Activated naive CD4-positive, alpha-beta T cell treated with anti-CD3 and anti-CD28 coated beads for 36 hours (primary cell): ENCODE measurements at regions of chr13 and their contacts with region 1.

Region 1: DNA sequence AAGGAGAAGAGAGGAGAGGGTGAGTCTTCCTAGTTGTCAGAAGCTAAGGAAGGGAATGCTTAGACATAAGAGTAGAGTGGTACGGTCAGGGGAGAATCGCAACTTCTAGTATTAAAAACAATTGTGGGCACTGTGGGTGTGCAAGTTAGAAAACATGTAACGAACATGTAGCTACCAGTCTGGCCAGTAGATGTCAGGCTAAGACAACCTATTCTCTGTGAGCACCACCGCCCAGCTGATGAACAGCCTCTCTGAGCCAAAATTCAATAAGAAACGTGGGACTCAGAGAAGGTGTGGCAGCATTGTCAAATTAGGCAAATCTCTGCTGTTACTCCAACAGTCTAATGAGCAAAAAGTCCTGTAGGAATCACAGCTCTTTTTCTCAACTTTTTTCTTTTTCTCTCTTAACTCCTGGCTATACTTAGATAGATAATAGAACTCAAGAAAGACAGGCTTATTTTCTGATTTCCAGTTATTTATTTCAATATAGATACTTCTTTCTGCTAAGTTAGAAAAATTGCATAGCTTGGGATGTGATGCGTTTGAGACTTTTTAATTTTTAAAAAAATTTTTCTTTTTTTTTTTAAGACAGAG is 186.2 kb downstream of the USP12 start:
- DNase-seq: peak; percentile 86
- H3K4me3 Mint-ChIP-seq: no peak overlapping the region
- H3K27ac Mint-ChIP-seq: no peak overlapping the region
- H3K4me1 Mint-ChIP-seq: no peaks in the 10 kb centered on the region
- H3K27me3 Mint-ChIP-seq: peaks cover 5% of the 10 kb centered on the region

Region 2: GRCh38 chr13:26557393-26558023 is 427.9 kb before region 1 on chr13 and contains the start of gene WASF3:
- CTCF ChIA-PET with region 1: no interaction called
- intact Hi-C with region 1: no loop called
- DNase-seq: peak; percentile 56
- H3K4me3 Mint-ChIP-seq: peak within 1 kb of the TSS; percentile 43
- H3K27ac Mint-ChIP-seq: no peak within 1 kb of the TSS
- H3K4me1 Mint-ChIP-seq: peaks cover 8% of the 10 kb centered on the region
- H3K27me3 Mint-ChIP-seq: peaks cover 36% of the 10 kb centered on the region
- total RNA-seq, gene WASF3: not detected

Region 3: GRCh38 chr13:26946684-26947343 is 38.6 kb before region 1 on chr13:
- CTCF ChIA-PET with region 1: no interaction called
- intact Hi-C with region 1: loop called (anchors 2 kb)
- DNase-seq: no peak
- H3K4me3 Mint-ChIP-seq: no peak overlapping the region
- H3K27ac Mint-ChIP-seq: no peak overlapping the region
- H3K4me1 Mint-ChIP-seq: no peaks in the 10 kb centered on the region
- H3K27me3 Mint-ChIP-seq: no peaks in the 10 kb centered on the region

Region 4: DNA sequence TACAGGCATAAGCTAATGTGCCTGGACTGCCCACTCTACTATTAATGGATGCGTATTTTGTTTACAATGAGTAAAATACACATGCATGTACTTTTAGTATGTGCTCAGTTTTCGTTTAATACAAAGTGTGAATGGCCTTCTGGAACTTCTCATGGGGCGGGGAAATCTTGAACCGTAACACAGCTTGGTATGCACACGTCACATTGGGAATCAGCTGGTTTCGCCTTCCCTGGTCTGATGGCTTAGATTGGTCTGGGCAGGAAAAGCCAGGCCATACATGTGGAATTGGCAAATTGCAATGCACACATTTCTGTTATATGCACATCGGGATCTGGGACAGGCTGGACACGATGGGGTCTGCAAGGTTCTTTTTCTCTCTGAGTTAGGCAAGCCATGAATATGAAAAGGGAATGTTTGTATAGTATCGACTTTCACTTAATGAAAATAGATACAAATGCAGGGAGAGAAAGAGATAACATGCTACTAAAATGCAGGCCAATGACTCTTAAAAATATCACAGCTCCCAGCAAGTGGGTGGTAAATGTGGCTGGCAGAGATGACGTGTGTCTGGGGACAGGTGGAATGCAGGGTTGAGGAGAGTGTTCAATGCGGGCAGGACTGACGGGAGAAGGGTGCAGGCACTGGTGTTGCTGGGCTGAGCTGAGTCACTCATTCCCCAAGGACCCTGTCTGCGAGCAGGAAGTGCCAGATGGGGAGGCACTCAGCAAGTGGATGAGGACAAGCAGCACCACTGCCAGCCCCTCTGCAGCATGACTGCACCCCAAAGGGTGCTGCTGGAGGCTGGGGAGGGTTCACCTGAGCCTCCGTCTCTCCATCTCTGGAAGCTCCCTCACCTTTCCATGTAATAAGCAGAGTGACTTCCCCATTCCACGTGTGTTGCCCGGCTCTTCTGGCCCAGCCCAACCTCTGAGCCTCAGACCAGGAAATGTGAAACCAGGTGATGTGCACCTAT is 20.8 kb before region 1 on chr13:
- CTCF ChIA-PET with region 1: no interaction called
- intact Hi-C with region 1: no loop called
- DNase-seq: no peak
- H3K4me3 Mint-ChIP-seq: no peak overlapping the region
- H3K27ac Mint-ChIP-seq: no peak overlapping the region
- H3K4me1 Mint-ChIP-seq: no peaks in the 10 kb centered on the region
- H3K27me3 Mint-ChIP-seq: no peaks in the 10 kb centered on the region

Region 5: DNA sequence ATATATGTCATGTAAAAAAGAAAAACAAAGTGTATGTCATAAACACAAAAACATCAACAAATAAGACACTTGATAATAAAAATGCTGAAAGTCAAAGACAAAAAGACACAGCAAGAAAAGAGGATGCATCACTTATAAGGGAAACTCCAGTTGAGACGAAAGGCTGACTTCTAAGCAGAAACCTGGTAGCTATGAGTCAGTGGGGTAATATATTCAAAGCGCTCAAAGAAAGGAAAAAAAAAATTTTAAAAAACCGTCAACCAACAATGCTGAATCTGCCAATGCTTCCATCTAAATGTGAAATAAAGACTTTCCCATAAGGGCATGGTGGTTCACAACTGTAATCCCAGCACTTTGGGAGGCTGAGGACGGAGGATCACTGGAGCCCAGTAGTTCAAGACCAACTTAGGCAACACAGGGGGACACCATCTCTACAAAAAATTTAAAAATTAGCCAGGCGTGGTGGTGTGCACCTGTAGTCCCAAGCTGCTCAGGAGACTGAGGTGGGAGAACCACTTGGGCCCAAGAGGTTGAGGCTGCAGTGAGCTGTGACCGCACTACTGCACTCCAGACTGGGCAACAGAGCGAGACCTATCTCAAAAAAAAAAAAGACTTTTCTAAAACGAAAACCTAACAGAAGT is 162.3 kb after region 1 on chr13:
- CTCF ChIA-PET with region 1: no interaction called
- intact Hi-C with region 1: no loop called
- DNase-seq: no peak
- H3K4me3 Mint-ChIP-seq: peak overlapping the region; percentile 56
- H3K27ac Mint-ChIP-seq: peak overlapping the region; percentile 93
- H3K4me1 Mint-ChIP-seq: peaks cover 81% of the 10 kb centered on the region
- H3K27me3 Mint-ChIP-seq: no peaks in the 10 kb centered on the region

Region 6: GRCh38 chr13:27171827-27172494 is 186.6 kb after region 1 on chr13:
- CTCF ChIA-PET with region 1: interaction called, 5 read pairs
- intact Hi-C with region 1: loop called (anchors 5 kb)
- DNase-seq: peak; percentile 79
- H3K4me3 Mint-ChIP-seq: peak overlapping the region; percentile 81
- H3K27ac Mint-ChIP-seq: peak overlapping the region; percentile 81
- H3K4me1 Mint-ChIP-seq: peaks cover 61% of the 10 kb centered on the region
- H3K27me3 Mint-ChIP-seq: no peaks in the 10 kb centered on the region

Region 7: DNA sequence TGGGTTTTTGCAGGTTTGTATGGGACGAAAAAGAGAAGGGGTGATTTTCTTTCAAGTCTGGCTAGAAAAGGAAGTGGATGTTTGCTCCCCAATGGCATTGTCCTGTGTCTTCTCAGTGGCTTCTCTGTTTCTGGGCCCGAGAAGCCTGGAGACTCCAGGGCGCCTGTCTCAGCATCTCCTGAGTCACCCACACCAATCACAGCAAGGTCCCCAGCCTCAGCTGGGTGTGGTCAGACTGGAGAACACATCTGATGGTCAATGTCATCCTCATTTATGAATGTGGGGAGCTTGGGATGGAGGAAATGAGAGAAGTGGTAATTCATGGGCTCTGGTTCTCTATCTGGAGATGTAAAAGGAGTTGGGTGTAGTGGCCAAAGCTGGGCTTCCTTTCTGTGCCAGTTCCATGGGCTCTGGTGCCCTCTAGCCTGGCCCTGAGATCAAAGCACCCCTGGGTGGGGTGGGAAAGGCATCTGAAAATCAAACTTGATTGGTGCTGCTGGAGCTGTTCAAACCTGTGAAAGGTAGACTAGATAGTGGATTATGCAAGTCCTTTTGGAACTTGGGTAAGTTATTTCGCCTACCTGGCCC is 298.6 kb after region 1 on chr13:
- CTCF ChIA-PET with region 1: interaction called, 7 read pairs
- intact Hi-C with region 1: loop called (anchors 1 kb)
- DNase-seq: peak; percentile 43
- H3K4me3 Mint-ChIP-seq: no peak overlapping the region
- H3K27ac Mint-ChIP-seq: no peak overlapping the region
- H3K4me1 Mint-ChIP-seq: no peaks in the 10 kb centered on the region
- H3K27me3 Mint-ChIP-seq: no peaks in the 10 kb centered on the region

Region 8: GRCh38 chr13:27362064-27362883 is 376.9 kb after region 1 on chr13:
- CTCF ChIA-PET with region 1: interaction called, 145 read pairs
- intact Hi-C with region 1: loop called (anchors 1 kb)
- DNase-seq: peak; percentile 85
- H3K4me3 Mint-ChIP-seq: no peak overlapping the region
- H3K27ac Mint-ChIP-seq: no peak overlapping the region
- H3K4me1 Mint-ChIP-seq: no peaks in the 10 kb centered on the region
- H3K27me3 Mint-ChIP-seq: peaks cover 18% of the 10 kb centered on the region